ENCODE measurements at regions of chr1 and their contacts with region 1.

Region 1: GRCh38 chr1:228493141-228494043 is 6.2 kb downstream of the RNF187 start:
- DNase-seq: no peak
- H3K4me3 ChIP-seq: no peak overlapping the region
- H3K27ac ChIP-seq: no peak overlapping the region
- H3K4me1 ChIP-seq: peaks cover 1 to 4% of the 10 kb centered on the region in 2 donors
- H3K27me3 ChIP-seq: no peaks in the 10 kb centered on the region
- CTCF ChIP-seq: no peak
- POLR2A ChIP-seq: no peak

Region 2: GRCh38 chr1:228478912-228479711 is 14.3 kb before region 1 on chr1:
- intact Hi-C with region 1: loop called (anchors 1 kb)
- DNase-seq: no peak
- H3K4me3 ChIP-seq: no peak overlapping the region
- H3K27ac ChIP-seq: no peak overlapping the region
- H3K4me1 ChIP-seq: no peaks in the 10 kb centered on the region
- H3K27me3 ChIP-seq: no peaks in the 10 kb centered on the region
- CTCF ChIP-seq: no peak
- POLR2A ChIP-seq: no peak

Measured in breast epithelium (tissue), 4 donors.